GM12878 (cell line): ENCODE measurements at regions of chr18 and their contacts with region 1.

Region 1: DNA sequence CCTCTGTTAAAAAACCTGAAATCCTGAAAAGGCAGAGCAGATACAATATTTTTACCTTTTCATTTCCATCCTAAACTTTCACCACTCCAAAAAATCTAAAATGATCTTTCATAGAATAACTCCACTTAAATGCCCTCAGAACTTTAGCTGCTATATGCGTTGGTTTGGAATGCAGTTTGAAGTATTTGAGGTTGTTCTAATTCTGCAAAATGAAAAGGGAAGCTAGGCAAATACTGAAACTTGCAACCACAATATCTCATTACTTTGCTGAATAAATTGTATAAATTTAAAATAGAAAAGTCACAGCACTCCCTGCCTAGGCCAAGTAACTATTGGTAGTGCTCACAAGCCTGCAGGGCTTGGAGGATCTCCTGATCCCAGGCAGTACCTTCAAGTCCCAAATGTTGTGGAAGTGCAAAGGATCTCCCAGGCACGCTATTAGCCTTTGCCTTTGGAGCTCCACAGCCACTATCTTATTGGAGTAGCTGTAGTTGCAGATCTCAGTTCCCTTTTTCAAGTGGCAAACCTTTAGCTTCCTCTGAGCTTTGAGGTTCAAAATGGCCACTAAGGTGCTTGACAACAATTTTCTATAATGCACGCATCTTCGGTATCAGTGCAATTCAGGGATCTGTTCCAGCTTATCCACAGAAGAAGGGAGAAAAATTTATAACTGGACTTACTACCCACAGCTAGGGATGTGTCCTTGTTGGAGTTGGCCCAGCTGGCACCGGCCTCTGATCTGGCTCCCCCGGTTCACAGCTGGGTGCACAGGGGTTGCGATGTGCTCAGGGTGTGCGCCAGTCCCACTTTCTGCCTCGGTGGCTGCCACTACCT is 43.4 kb upstream of the ANKRD62 start:
- DNase-seq: peak; percentile 59
- ATAC-seq: peak; percentile 97
- H3K4me3 ChIP-seq: peak overlapping the region; percentile 24; the same call in 1 of the 2 replicates
- H3K27ac ChIP-seq: peak overlapping the region; percentile 73
- H3K4me1 ChIP-seq: peaks cover 32% of the 10 kb centered on the region
- H3K27me3 ChIP-seq: no peaks in the 10 kb centered on the region
- CTCF ChIP-seq: no peak
- EP300 ChIP-seq: peak in 1 of 2 experiments; percentile 67; a peak in 1 of 4 replicates
- POLR2A ChIP-seq: no peak
- RAD21 ChIP-seq: no peak

Region 2: DNA sequence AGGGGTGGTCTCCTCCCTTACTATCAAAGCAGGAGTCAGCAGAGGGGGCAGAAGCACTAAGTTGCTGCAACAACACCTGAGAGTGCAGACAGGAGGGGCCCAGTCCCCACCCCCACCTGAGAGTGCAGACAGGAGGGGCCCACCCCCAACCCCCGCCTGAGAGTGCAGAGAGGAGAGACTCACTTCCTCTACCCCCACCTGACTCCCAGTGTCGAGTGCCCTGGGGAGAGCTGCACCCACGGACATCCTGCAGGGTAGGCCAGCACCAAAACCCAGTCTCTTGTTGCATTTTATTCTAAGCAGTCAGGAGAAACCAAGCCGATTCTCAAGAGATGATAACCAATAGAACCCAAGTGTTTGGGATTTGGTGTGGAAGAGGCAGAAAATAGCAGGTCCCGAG is 1446.0 kb before region 1 on chr18:
- CTCF ChIA-PET with region 1: no interaction called
- POLR2A ChIA-PET with region 1: no interaction called
- RAD21 ChIA-PET with region 1: no interaction called
- SMC1A ChIA-PET with region 1: no interaction called
- in situ Hi-C with region 1: no loop called
- intact Hi-C with region 1: no loop called
- DNase-seq: no peak
- ATAC-seq: peak; percentile 45; the same call in 1 of the 3 replicates
- H3K4me3 ChIP-seq: no peak overlapping the region
- H3K27ac ChIP-seq: no peak overlapping the region; the same call in 1 of the 2 replicates
- H3K4me1 ChIP-seq: no peaks in the 10 kb centered on the region; the same call in 1 of the 2 replicates
- H3K27me3 ChIP-seq: no peaks in the 10 kb centered on the region
- CTCF ChIP-seq: no peak
- EP300 ChIP-seq: no peak
- POLR2A ChIP-seq: no peak
- RAD21 ChIP-seq: no peak

Region 3: DNA sequence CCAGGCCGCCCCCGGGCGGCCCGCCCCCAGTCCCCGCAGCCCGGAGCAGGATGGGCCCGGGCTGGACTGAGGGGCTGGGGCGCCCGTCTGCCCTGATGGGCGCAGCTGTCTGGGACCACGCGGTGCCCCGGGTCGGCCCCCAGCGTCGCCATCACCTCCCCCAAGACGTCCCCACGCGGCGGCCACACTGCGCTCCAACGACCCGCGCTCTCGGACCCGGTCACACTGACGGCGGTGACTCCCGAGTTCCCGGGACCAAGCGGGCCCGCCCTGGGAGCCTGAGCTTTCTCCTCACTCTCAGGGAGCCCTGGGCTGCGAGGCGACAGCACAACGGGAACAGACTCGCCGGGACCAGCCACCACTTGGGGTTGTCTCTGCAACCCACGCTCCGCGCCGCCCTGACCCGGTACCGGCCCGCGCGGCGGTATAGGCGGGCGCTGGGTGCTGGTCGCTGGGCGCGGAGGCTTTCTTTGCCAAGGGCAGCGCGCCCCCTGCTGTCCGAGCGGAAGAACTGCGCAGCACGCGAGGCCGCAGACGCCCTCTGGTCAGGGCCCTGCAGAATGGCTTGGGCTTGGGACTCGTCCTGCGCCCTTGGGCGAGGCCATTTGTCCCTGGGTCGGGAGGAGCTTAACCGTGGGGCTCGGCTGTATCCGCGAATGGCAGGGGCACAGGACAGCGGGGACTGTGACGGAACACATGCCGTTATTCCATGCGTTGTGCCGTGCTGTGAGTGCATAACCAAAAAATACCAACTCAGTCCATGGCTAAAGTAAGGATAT is 11.4 kb before region 1 on chr18:
- CTCF ChIA-PET with region 1: interaction called, 16 read pairs
- POLR2A ChIA-PET with region 1: no interaction called
- RAD21 ChIA-PET with region 1: no interaction called
- SMC1A ChIA-PET with region 1: interaction called, 3 read pairs
- in situ Hi-C with region 1: no loop called
- intact Hi-C with region 1: no loop called
- DNase-seq: no peak
- ATAC-seq: peak; percentile 97
- H3K4me3 ChIP-seq: peak overlapping the region; percentile 53; the same call in 1 of the 2 replicates
- H3K27ac ChIP-seq: no peak overlapping the region
- H3K4me1 ChIP-seq: peaks cover 5% of the 10 kb centered on the region
- H3K27me3 ChIP-seq: peaks cover 0 to 3% of the 10 kb centered on the region in 2 experiments; a peak in 2 of 4 replicates
- CTCF ChIP-seq: peak; percentile 95 to 99 (median 95); a peak in 5 of 6 replicates
- EP300 ChIP-seq: no peak
- POLR2A ChIP-seq: no peak
- RAD21 ChIP-seq: peak; percentile 83

Region 4: DNA sequence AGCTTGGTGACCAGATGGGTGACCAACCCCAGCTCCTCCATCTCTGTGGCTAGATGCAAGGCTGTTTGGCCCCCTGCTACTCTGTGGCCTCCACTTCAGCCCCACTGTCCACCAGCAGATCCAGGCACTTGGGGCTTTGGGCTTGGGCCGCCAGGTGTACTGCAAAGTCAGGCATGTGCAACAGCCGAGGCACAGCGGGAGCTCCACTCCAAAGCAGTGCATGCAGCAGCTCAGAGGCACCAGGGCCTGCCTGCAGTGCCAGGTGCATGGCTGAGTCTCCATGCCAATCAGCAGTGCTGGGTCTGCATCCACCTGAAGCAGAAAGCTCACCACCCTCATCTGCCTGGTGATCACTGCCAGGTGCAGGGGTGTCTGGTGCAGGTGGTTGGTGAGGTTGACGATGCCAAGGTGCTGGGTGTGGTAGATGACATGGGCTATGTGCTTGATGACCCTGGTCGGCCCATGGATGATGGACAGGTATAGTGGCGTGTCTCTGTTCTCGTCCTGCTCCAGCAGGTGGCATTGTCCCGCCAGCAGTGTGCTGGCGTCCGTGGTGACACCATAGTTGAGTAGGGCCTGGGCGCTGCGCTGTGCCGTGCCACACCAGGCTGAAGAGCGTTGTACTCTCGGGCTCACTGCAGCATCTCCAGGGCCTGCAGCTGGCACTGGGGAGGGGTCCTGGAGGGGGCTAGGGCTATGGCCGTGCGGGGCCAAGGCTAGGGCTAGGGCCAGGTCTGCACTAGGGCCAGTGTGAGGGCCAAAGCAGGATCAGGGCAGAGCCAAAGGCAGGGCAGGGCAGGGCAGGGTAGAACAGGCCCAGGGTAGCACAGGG is 42.4 kb after region 1 on chr18:
- CTCF ChIA-PET with region 1: no interaction called
- POLR2A ChIA-PET with region 1: no interaction called
- RAD21 ChIA-PET with region 1: no interaction called
- SMC1A ChIA-PET with region 1: no interaction called
- in situ Hi-C with region 1: no loop called
- intact Hi-C with region 1: no loop called
- DNase-seq: peak; percentile 5
- ATAC-seq: peak; percentile 94
- H3K4me3 ChIP-seq: no peak overlapping the region
- H3K27ac ChIP-seq: no peak overlapping the region
- H3K4me1 ChIP-seq: no peaks in the 10 kb centered on the region
- H3K27me3 ChIP-seq: no peaks in the 10 kb centered on the region
- CTCF ChIP-seq: peak; percentile 49 to 60 (median 49); a peak in 5 of 6 replicates
- EP300 ChIP-seq: no peak
- POLR2A ChIP-seq: no peak
- RAD21 ChIP-seq: peak; percentile 67

Region 5: DNA sequence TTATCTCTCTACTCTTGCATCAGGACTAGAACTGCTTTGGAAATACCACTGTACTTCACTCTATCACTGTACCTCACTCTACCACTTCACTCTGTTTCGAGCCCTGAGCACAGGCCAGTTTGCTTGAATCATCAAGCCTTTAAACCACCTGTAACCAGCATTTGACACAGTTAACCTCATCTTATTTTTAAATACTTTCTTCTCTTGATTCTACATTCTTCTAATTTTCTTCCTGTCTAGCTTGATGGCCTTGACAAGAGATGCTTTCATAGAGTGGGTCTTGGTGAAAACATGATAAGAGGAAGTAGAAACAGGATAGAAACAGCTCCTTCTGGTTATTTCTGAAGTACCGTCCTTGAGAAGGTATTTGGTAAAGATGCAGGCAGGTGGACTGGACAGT is 529.6 kb after region 1 on chr18:
- CTCF ChIA-PET with region 1: no interaction called
- POLR2A ChIA-PET with region 1: no interaction called
- RAD21 ChIA-PET with region 1: no interaction called
- SMC1A ChIA-PET with region 1: no interaction called
- in situ Hi-C with region 1: no loop called
- intact Hi-C with region 1: no loop called
- DNase-seq: no peak
- ATAC-seq: no peak
- H3K4me3 ChIP-seq: no peak overlapping the region
- H3K27ac ChIP-seq: no peak overlapping the region
- H3K4me1 ChIP-seq: no peaks in the 10 kb centered on the region; the same call in 1 of the 2 replicates
- H3K27me3 ChIP-seq: no peaks in the 10 kb centered on the region
- CTCF ChIP-seq: no peak
- EP300 ChIP-seq: no peak
- POLR2A ChIP-seq: no peak
- RAD21 ChIP-seq: no peak